Caco-2 (cell line): ENCODE measurements at regions of chr3 and their contacts with region 1.

Region 1: GRCh38 chr3:908839-909238 is 184.0 kb upstream of the CNTN6 start:
- DNase-seq: peak in 1 of 2 experiments; percentile 3
- H3K4me3 ChIP-seq: no peak overlapping the region
- H3K4me3 Mint-ChIP-seq: no peak overlapping the region
- H3K27ac Mint-ChIP-seq: no peak overlapping the region
- H3K4me1 ChIP-seq: peaks cover 4% of the 10 kb centered on the region
- H3K4me1 Mint-ChIP-seq: peaks cover 6% of the 10 kb centered on the region
- H3K27me3 ChIP-seq: no peaks in the 10 kb centered on the region
- H3K27me3 Mint-ChIP-seq: no peaks in the 10 kb centered on the region
- CTCF ChIP-seq: peak in 1 of 2 experiments; percentile 30

Region 2: DNA sequence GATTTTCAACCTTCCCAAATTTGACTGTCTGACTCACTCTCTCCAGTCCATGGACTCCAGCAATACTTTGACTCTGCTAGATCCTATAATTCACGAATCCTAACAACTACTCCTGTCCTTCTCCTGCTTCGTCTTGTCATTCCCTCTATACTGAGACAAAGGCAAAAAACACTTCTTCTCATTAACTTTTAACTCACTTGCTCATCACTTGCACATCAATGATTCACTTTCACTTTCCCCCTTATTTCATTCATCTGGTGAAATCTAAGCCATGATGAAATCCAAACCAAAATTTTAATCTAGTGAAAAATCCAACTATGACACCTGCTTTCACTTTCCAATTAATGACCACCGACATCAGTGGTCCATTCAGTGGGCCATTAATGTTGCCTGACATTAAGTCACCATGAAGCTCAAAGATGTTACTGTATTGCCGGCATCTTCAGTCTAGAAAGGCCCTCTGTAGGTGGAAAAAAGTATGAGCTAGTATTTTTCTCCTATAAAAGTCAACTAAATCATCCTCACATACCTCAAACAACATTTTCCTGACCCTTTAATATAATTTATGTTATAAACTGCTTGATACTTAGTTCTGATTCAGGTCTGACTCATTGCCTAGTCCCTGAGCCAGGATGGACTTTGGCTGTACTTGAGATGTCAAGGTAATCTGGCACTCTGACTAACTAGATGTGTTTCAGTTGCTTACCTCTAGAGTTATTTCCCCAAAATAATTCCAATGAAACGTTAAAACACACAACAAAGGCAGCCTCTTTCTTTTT is 342.6 kb after region 1 on chr3:
- CTCF ChIA-PET with region 1: no interaction called
- POLR2A ChIA-PET with region 1: no interaction called
- intact Hi-C with region 1: loop called (anchors 5 kb)
- DNase-seq: no peak
- H3K4me3 ChIP-seq: no peak overlapping the region
- H3K4me3 Mint-ChIP-seq: no peak overlapping the region
- H3K27ac Mint-ChIP-seq: no peak overlapping the region
- H3K4me1 ChIP-seq: no peaks in the 10 kb centered on the region
- H3K4me1 Mint-ChIP-seq: no peaks in the 10 kb centered on the region
- H3K27me3 ChIP-seq: no peaks in the 10 kb centered on the region
- H3K27me3 Mint-ChIP-seq: peaks cover 10% of the 10 kb centered on the region
- CTCF ChIP-seq: peak in 1 of 2 experiments; percentile 14

Region 3: DNA sequence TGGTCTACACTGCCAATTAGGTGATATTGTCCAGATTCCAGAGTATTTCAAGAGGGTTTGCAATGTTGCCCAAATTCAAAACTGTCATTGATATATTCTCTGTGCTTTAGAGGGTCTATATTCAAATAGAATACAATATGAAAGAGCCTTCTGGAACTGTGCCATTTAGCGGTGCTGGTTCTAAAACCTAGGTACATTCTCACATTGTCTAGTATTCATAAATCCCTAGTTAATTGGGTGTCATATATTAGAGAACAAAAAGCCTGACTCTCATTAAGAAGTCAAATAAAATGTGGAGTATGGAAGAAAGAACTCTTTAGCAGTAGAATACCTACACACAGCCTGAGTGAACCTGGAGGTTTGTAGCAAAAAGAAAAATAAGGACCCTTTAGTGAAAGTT is 631.8 kb after region 1 on chr3:
- CTCF ChIA-PET with region 1: no interaction called
- POLR2A ChIA-PET with region 1: no interaction called
- intact Hi-C with region 1: no loop called
- DNase-seq: no peak
- H3K4me3 ChIP-seq: no peak overlapping the region
- H3K4me3 Mint-ChIP-seq: no peak overlapping the region
- H3K27ac Mint-ChIP-seq: no peak overlapping the region
- H3K4me1 ChIP-seq: no peaks in the 10 kb centered on the region
- H3K4me1 Mint-ChIP-seq: no peaks in the 10 kb centered on the region
- H3K27me3 ChIP-seq: no peaks in the 10 kb centered on the region
- H3K27me3 Mint-ChIP-seq: peaks cover 2% of the 10 kb centered on the region
- CTCF ChIP-seq: no peak